PC-3 (cell line): ENCODE measurements at regions of chr5 and their contacts with region 1.

Region 1: DNA sequence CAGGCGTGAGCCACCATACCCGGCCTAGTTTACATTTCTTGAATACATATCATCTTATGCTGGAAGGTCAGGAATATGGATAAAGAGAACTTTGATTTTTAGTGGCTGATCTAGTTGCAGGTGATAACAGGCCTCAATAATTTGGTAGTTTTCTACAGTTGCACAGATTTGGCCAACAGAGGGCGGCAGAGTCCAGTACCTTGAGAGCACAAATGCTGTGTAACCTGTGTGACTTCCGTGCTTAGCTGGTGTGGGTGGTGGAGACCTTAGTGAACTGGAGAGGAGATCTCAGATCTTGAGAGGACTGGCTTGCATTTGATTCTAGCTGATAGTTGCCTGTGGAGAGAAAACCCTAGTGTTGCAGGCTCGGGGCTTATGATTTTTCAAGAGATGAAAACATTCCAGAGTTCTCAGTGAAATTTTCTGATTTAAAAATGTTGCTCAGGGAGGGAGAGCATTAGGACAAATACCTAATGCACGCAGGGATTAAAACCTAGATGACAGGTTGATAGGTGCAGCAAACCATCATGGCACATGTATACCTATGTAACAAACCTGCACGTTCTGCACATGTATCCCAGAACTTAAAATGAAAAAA is 17.4 kb upstream of the GPR151 start:
- DNase-seq: peak; percentile 93
- ATAC-seq: peak; percentile 95
- H3K4me3 ChIP-seq: no peak overlapping the region
- H3K27ac ChIP-seq: no peak overlapping the region
- H3K4me1 ChIP-seq: no peaks in the 10 kb centered on the region
- H3K27me3 ChIP-seq: no peaks in the 10 kb centered on the region
- CTCF ChIP-seq: peak; percentile 97

Region 2: GRCh38 chr5:146221234-146221633 is 312.1 kb before region 1 on chr5:
- CTCF ChIA-PET with region 1: no interaction called
- POLR2A ChIA-PET with region 1: no interaction called
- intact Hi-C with region 1: no loop called
- DNase-seq: no peak
- ATAC-seq: no peak
- H3K4me3 ChIP-seq: no peak overlapping the region
- H3K27ac ChIP-seq: no peak overlapping the region
- H3K4me1 ChIP-seq: no peaks in the 10 kb centered on the region
- H3K27me3 ChIP-seq: no peaks in the 10 kb centered on the region
- CTCF ChIP-seq: no peak

Region 3: GRCh38 chr5:146446853-146447733 is 86.3 kb before region 1 on chr5 and contains the start of gene TCERG1:
- CTCF ChIA-PET with region 1: interaction called, 3 read pairs
- POLR2A ChIA-PET with region 1: no interaction called
- intact Hi-C with region 1: loop called (anchors 2 kb)
- DNase-seq: peak; percentile 100
- ATAC-seq: peak; percentile 91
- H3K4me3 ChIP-seq: peak within 1 kb of the TSS; percentile 77
- H3K27ac ChIP-seq: peak within 1 kb of the TSS; percentile 77
- H3K4me1 ChIP-seq: peaks cover 33% of the 10 kb centered on the region
- H3K27me3 ChIP-seq: no peaks in the 10 kb centered on the region
- CTCF ChIP-seq: peak; percentile 93
- total RNA-seq, gene TCERG1: 86.0 and 96.9 TPM in 2 replicates

Region 4: DNA sequence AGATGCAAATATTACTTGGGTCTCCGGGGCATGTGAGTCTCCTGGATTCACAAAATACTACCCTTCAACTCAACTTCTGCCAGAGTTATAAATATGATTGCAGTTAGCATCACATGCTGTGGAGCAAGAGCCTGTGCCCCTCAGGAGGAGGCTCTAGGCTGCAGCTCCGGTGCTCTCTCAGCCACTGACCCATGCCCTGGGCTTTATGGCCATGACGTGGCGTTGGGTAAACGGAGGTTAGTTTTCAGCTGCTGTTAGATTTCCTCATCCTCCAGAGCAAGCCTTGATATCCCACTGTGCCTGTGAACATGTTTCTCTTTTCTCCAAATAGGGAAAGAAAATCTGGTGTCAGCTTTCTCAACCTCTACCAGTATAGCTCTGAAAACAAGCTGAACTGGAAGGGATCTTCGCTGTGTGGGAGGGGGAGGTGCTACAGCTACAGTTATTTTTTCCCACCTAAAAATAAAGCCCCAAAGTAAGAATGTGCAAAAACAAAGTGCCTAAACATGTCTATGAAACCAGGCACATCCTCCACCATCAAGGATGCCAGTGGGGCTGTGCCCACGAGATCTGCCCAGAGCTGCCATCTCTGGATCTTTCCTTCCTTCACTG is 107.0 kb after region 1 on chr5:
- CTCF ChIA-PET with region 1: no interaction called
- POLR2A ChIA-PET with region 1: interaction called, 16 read pairs
- intact Hi-C with region 1: no loop called
- DNase-seq: peak; percentile 11
- ATAC-seq: peak; percentile 43; the same call in 1 of the 2 replicates
- H3K4me3 ChIP-seq: no peak overlapping the region
- H3K27ac ChIP-seq: no peak overlapping the region
- H3K4me1 ChIP-seq: no peaks in the 10 kb centered on the region
- H3K27me3 ChIP-seq: peaks cover 73% of the 10 kb centered on the region
- CTCF ChIP-seq: no peak

Region 5: DNA sequence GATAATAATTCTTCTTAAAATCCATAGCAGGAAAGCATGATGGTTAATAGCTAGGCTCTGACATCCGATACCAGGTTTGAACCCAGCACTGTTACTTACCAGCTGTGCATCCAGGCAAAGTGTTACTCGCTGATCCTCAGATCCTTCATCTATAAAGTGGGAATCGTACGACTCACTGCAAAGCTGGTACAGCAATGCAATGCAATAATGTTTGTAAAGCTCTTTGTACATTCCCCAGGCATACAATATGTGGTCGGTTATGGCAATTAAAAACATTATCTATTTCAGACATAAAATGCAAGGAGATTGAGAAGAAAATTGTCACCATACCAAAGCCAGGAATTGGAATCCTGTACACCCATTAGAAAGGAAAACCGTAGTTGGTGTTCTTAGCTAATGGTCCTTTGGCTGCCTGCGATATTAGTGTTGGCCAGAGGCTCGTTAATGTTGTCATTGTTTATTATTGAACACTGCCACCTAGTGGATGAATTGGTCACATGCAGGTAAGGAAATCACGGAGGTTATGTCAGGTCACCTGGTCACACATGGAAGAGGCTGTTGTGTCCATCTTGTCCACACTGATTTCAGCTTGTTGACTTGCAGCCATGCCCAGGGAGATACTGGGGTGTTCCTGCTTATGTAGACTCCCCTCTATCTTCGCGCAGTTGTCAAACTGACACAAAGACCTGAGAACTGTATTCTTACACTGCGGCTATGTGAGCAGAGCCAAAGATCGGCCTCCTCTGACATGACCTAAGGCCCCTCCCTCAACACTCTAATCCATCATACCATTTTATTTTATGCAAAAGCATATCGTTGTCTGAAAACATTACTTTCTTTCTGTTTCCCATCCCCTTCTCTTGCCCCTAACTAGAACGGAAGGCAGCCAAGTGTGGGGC is 432.7 kb after region 1 on chr5:
- CTCF ChIA-PET with region 1: interaction called, 9 read pairs
- POLR2A ChIA-PET with region 1: no interaction called
- intact Hi-C with region 1: loop called (anchors 1 kb)
- DNase-seq: peak; percentile 83
- ATAC-seq: peak; percentile 88
- H3K4me3 ChIP-seq: no peak overlapping the region
- H3K27ac ChIP-seq: no peak overlapping the region
- H3K4me1 ChIP-seq: no peaks in the 10 kb centered on the region
- H3K27me3 ChIP-seq: peaks cover 21% of the 10 kb centered on the region; the same call in 1 of the 2 replicates
- CTCF ChIP-seq: peak; percentile 76

Region 6: DNA sequence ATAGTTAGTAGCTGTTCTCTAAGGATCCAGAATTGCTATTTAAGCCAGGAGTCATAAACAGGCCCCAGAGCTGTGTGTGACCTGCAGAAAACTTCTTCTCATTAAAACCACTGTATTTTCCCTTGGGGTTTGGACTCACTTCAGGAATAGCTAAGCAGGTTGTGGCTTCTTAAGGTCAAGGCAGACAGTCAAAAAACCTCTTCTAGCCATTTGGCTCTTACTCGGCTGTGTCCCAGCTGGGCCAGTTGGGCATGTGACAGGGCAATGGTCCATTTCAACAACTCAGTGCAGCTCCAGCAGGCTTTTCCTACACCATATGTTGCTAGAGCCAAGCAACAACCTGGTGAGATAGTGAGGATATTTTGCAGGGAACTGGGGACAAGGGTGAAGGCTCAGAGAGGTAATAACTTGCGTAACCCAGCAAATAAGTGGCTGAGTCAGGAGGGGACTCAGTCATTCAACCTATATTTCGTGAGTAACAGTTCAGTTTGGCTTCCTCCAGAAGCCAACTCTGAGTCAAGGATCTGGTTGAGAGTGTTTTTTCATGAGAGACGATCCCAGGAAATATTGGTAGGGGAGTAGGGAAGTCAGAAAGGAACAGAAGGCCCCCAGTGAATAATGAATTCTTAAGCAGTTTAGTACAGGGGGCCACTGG is 460.6 kb after region 1 on chr5:
- CTCF ChIA-PET with region 1: no interaction called
- POLR2A ChIA-PET with region 1: no interaction called
- intact Hi-C with region 1: no loop called
- DNase-seq: peak; percentile 51
- ATAC-seq: no peak
- H3K4me3 ChIP-seq: no peak overlapping the region
- H3K27ac ChIP-seq: no peak overlapping the region
- H3K4me1 ChIP-seq: no peaks in the 10 kb centered on the region
- H3K27me3 ChIP-seq: no peaks in the 10 kb centered on the region
- CTCF ChIP-seq: no peak

Region 7: DNA sequence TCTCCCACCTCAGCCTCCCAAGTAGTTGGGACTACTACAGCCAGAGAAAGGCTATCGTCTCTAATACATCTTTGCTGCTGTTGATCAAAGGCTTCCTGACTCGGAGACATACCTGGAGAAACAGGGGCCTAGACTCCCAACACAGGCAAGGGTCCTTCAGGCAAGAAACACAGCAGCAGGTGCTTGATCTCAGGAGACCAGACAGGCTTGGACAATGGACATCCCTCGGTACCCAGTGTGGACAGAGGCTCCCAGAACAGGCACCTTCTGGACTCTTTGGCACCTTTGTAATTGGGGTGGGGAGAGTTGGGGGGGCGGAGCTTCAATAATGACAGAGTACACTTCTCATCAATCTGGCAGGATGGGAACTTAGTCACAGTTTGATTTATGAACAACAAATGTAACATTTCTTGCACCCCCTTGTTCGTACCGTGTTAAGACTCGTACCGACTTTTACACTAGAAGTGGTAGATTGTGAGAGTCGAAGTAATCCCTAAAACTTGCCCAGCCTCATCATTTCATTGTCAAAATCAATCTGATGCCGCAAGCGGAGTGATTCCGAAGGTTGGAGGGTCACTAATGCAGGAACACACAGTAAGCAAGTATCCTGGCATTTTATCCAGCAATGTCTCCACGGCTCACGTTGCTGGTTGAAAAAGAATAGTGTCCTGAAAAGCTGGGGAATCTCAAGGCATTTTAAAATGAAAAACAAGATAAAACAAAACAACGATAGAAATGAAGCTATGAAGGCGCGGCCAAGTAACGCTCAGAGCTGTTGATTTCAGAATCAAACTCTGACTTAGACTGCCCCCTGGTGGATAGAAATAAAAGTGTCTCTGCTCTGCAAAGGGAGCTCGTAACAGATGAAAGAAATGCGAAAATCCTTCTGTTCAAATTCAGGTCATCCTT is 655.1 kb after region 1 on chr5:
- CTCF ChIA-PET with region 1: interaction called, 4 read pairs
- POLR2A ChIA-PET with region 1: no interaction called
- intact Hi-C with region 1: loop called (anchors 1 kb)
- DNase-seq: peak; percentile 75
- ATAC-seq: peak; percentile 85
- H3K4me3 ChIP-seq: peak overlapping the region; percentile 68
- H3K27ac ChIP-seq: no peak overlapping the region
- H3K4me1 ChIP-seq: no peaks in the 10 kb centered on the region
- H3K27me3 ChIP-seq: peaks cover 24% of the 10 kb centered on the region
- CTCF ChIP-seq: peak; percentile 79